ENCODE measurements at regions of chr3 and their contacts with region 1.

Region 1: DNA sequence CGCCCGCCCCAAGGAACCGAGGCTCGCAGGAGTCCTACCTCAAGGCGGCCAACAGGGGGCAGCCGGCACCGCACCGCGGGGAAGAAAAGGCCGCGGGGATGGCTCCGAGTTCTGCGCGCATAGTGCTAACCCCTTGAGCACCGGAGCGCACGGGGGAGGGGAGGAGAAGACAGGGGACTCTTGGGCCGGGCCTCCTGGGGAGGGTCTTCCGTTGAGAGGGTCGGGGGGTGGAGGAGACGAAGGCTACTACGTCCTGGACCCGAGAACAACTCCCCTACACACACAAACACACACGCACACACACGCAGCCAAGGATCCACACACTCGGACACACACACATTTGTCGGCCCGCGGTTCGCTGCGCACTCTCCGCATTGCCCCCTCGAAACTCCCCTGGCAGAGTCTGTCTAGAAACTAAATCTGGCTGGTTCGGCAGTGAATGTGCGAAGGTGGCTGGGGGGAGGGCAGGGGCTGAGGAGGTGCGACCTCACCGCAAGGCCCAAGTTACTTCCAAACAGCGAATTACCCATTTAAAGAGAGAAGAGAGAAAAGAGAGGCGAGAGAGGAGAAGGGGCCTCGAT is 1.8 kb downstream of the WNT5A start:
- DNase-seq: peak; percentile 85

Region 2: DNA sequence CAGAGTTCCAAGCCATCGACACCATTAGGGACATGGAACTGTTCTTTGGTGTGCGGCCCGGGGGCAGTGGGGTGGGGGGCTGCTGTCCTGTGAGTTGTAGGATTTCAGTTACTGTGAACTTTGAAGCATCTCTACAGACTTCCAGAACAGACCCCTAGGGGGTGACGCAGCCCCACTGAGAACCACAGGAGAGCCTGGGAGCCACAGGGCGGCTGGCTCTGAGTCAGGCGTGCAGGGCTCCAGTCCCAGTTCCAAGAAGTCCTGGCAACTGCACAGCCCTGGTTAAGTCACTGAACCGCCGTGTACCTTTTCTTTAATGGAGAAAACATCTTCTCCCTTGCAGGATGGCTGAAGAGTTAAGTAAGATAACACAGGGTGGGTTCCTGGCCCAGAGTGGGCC is 533.9 kb before region 1 on chr3:
- intact Hi-C with region 1: loop called (anchors 10 kb)
- DNase-seq: peak; percentile 83

Region 3: DNA sequence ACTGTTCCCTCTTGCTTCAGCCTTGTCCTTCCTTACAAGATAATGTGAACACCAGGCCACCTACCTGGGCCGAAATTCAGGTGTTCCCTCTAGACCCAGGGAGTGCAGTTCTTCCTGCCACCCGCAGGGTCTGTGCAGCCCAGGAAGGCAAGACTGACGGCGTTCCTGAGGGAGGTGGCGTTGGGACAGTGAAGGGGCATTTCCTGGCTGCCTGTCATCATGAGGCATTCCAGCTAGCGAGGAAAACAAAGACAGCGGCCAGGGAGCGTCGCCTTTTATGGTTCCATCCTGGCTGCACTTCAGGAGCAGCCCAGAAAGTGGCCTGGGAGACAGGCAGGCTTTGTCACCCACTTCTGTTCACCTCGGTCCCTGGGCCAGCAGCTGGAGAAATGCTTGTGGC is 86.6 kb after region 1 on chr3:
- intact Hi-C with region 1: loop called (anchors 5 kb)
- DNase-seq: peak; percentile 84

Region 4: GRCh38 chr3:55686426-55687254 is 201.3 kb after region 1 on chr3:
- intact Hi-C with region 1: no loop called
- DNase-seq: no peak

Region 5: GRCh38 chr3:55746808-55747413 is 261.6 kb after region 1 on chr3:
- intact Hi-C with region 1: loop called (anchors 2 kb)
- DNase-seq: no peak

Region 6: GRCh38 chr3:56042326-56042951 is 557.1 kb after region 1 on chr3:
- intact Hi-C with region 1: loop called (anchors 2 kb)
- DNase-seq: no peak

Region 7: GRCh38 chr3:56251343-56251945 is 766.1 kb after region 1 on chr3:
- intact Hi-C with region 1: loop called (anchors 2 kb)
- DNase-seq: no peak

Measured in cardiac septum (tissue), 1 donor.